ENCODE measurements at regions of chr17 and their contacts with region 1.

Region 1: GRCh38 chr17:14300575-14301278 is at the start of gene HS3ST3B1:
- DNase-seq: peak; percentile 96 to 100 (median 99)
- ATAC-seq: peak; percentile 84
- H3K4me3 ChIP-seq: peak within 1 kb of the TSS; percentile 97
- H3K4me3 Mint-ChIP-seq: peak within 1 kb of the TSS; percentile 99
- H3K27ac ChIP-seq: peak within 1 kb of the TSS; percentile 68 to 73
- H3K27ac Mint-ChIP-seq: peak within 1 kb of the TSS; percentile 86
- H3K4me1 ChIP-seq: peaks cover 69% of the 10 kb centered on the region
- H3K4me1 Mint-ChIP-seq: peaks cover 68% of the 10 kb centered on the region
- H3K27me3 ChIP-seq: peaks cover 25 to 32% of the 10 kb centered on the region in 2 experiments
- H3K27me3 Mint-ChIP-seq: peaks cover 48% of the 10 kb centered on the region
- CTCF ChIP-seq: no peak
- total RNA-seq, gene HS3ST3B1: 9.3 to 11.5 TPM

Region 2: DNA sequence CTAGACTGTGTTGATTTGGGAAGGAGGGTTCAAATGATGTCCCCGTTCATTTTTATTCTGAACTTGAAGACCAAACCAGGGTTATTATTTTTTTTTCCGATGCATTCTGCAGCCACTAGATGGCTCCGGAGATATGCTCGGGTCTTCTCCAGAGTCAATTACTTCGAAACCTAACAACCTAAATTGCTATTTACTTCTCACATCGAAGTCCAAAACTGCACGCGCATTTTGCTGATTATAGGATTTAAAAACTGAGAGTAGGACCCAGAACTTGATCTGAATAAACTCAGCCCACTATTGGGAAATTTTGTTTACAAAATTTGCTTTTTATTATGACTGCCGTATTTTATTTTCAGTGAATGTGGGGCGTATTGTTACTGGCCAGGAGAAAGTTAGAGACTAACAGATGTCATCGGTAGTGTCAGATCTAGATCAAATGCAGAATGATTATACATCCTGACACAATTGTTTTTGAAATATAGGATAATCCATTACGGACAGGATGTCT is 962.8 kb before region 1 on chr17:
- CTCF ChIA-PET with region 1: no interaction called
- POLR2A ChIA-PET with region 1: no interaction called
- intact Hi-C with region 1: loop called in 1 of 2 experiments (anchors 5 kb)
- DNase-seq: peak in 4 of 14 experiments; percentile 7 to 36 (median 26)
- ATAC-seq: no peak
- H3K4me3 ChIP-seq: no peak overlapping the region
- H3K4me3 Mint-ChIP-seq: no peak overlapping the region
- H3K27ac ChIP-seq: no peak overlapping the region
- H3K27ac Mint-ChIP-seq: no peak overlapping the region
- H3K4me1 ChIP-seq: no peaks in the 10 kb centered on the region
- H3K4me1 Mint-ChIP-seq: peaks cover 6% of the 10 kb centered on the region
- H3K27me3 ChIP-seq: peaks cover 6 to 10% of the 10 kb centered on the region in 2 experiments
- H3K27me3 Mint-ChIP-seq: peaks cover 34% of the 10 kb centered on the region
- CTCF ChIP-seq: peak; percentile 61

Region 3: GRCh38 chr17:14069251-14070021 is 231.3 kb before region 1 on chr17 and contains the start of gene COX10:
- CTCF ChIA-PET with region 1: interaction called, 6 read pairs
- POLR2A ChIA-PET with region 1: interaction called, 20 read pairs
- intact Hi-C with region 1: loop called (anchors 1 to 2 kb)
- DNase-seq: peak; percentile 68 to 88 (median 80)
- ATAC-seq: peak; percentile 99
- H3K4me3 ChIP-seq: peak within 1 kb of the TSS; percentile 89
- H3K4me3 Mint-ChIP-seq: peak within 1 kb of the TSS; percentile 97
- H3K27ac ChIP-seq: peak within 1 kb of the TSS; percentile 57 to 68
- H3K27ac Mint-ChIP-seq: peak within 1 kb of the TSS; percentile 92
- H3K4me1 ChIP-seq: peaks cover 22% of the 10 kb centered on the region
- H3K4me1 Mint-ChIP-seq: peaks cover 61% of the 10 kb centered on the region
- H3K27me3 ChIP-seq: no peaks in the 10 kb centered on the region
- H3K27me3 Mint-ChIP-seq: no peaks in the 10 kb centered on the region
- CTCF ChIP-seq: no peak
- total RNA-seq, gene COX10: 9.1 to 9.9 TPM

Region 4: GRCh38 chr17:14203388-14203787 is 97.3 kb before region 1 on chr17:
- CTCF ChIA-PET with region 1: interaction called, 26 read pairs
- POLR2A ChIA-PET with region 1: interaction called, 111 read pairs
- intact Hi-C with region 1: loop called (anchors 1 to 5 kb)
- DNase-seq: peak in 11 of 14 experiments; percentile 30 to 74 (median 44)
- ATAC-seq: peak; percentile 45
- H3K4me3 ChIP-seq: no peak overlapping the region
- H3K4me3 Mint-ChIP-seq: peak overlapping the region; percentile 66
- H3K27ac ChIP-seq: peak overlapping the region; percentile 78 to 79
- H3K27ac Mint-ChIP-seq: peak overlapping the region; percentile 94
- H3K4me1 ChIP-seq: peaks cover 86% of the 10 kb centered on the region
- H3K4me1 Mint-ChIP-seq: peaks cover 86% of the 10 kb centered on the region
- H3K27me3 ChIP-seq: no peaks in the 10 kb centered on the region
- H3K27me3 Mint-ChIP-seq: no peaks in the 10 kb centered on the region
- CTCF ChIP-seq: peak; percentile 58

Region 5: DNA sequence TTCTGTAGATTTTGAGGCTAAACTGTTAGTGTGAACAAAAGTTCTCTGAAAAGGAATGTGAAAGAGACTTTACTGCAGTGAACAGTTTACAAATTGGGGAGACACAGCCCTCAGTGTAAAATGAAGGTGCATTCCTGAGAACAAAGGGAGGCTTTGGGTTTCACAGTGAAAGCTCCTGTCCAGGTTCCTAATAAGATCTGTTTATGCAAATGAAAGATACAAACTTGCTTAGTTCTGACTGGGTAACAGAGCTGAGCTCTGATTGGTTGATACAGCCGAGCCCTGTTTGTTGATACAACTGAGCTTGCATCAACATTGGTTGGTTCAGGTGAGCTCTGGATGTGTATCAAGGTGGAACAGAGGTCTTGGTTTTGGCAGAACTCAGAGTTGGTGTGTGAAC is 55.7 kb before region 1 on chr17:
- CTCF ChIA-PET with region 1: no interaction called
- POLR2A ChIA-PET with region 1: no interaction called
- intact Hi-C with region 1: no loop called
- DNase-seq: no peak
- ATAC-seq: no peak
- H3K4me3 ChIP-seq: no peak overlapping the region
- H3K4me3 Mint-ChIP-seq: no peak overlapping the region
- H3K27ac ChIP-seq: no peak overlapping the region
- H3K27ac Mint-ChIP-seq: no peak overlapping the region
- H3K4me1 ChIP-seq: no peaks in the 10 kb centered on the region
- H3K4me1 Mint-ChIP-seq: no peaks in the 10 kb centered on the region
- H3K27me3 ChIP-seq: no peaks in the 10 kb centered on the region
- H3K27me3 Mint-ChIP-seq: no peaks in the 10 kb centered on the region
- CTCF ChIP-seq: no peak

Region 6: DNA sequence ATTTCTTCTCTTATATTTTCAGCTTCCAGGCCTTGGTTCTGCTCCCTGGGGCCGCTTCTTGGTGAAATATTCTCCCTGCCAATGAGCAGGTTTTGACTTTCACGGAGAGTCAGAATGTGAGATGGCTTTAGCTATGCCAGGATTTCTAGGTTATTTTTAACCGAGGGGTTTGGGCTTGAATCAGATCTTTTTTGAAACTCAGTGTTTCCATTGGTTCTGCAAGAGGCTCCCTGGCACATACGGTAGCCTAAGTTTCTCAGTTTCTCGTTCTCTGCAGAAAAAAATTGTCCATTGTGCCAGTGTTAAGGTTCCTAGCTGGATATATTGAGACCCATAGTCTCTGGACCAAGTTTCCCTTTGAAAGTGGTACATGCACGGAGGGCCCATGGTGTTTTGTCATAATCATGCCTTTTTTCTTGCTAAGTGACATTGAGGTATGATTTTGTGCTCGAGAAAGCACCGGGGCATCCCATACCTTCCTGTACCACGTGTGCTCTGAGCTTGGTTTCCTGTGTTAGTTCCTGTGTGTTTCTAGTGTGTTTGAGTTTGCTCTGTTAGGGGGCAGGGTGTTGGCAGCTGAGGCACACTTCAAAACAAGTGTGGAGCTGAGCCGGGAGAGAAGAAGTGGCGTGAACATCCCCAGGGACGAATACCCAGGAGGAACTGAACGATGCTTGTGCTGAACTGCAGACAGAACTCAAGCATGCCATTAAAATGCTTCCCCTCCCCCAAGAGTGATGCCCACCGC is 127.3 kb after region 1 on chr17:
- CTCF ChIA-PET with region 1: no interaction called
- POLR2A ChIA-PET with region 1: interaction called, 93 read pairs
- intact Hi-C with region 1: loop called in 1 of 2 experiments (anchors 2 kb)
- DNase-seq: peak in 13 of 14 experiments; percentile 15 to 86 (median 47)
- ATAC-seq: peak; percentile 99
- H3K4me3 ChIP-seq: peak overlapping the region; percentile 52
- H3K4me3 Mint-ChIP-seq: peak overlapping the region; percentile 71
- H3K27ac ChIP-seq: peak overlapping the region; percentile 68 to 74
- H3K27ac Mint-ChIP-seq: peak overlapping the region; percentile 93
- H3K4me1 ChIP-seq: peaks cover 47% of the 10 kb centered on the region
- H3K4me1 Mint-ChIP-seq: peaks cover 58% of the 10 kb centered on the region
- H3K27me3 ChIP-seq: no peaks in the 10 kb centered on the region
- H3K27me3 Mint-ChIP-seq: no peaks in the 10 kb centered on the region
- CTCF ChIP-seq: no peak

Region 7: GRCh38 chr17:14784997-14785696 is 484.4 kb after region 1 on chr17:
- CTCF ChIA-PET with region 1: interaction called, 3 read pairs
- POLR2A ChIA-PET with region 1: interaction called, 3 read pairs
- intact Hi-C with region 1: loop called (anchors 1 to 5 kb)
- DNase-seq: peak in 13 of 14 experiments; percentile 2 to 62 (median 30)
- ATAC-seq: peak; percentile 69
- H3K4me3 ChIP-seq: no peak overlapping the region
- H3K4me3 Mint-ChIP-seq: no peak overlapping the region
- H3K27ac ChIP-seq: no peak overlapping the region
- H3K27ac Mint-ChIP-seq: no peak overlapping the region
- H3K4me1 ChIP-seq: no peaks in the 10 kb centered on the region
- H3K4me1 Mint-ChIP-seq: no peaks in the 10 kb centered on the region
- H3K27me3 ChIP-seq: no peaks in the 10 kb centered on the region
- H3K27me3 Mint-ChIP-seq: peaks cover 11% of the 10 kb centered on the region
- CTCF ChIP-seq: peak; percentile 13

Measured in CD4-positive, alpha-beta T cell (primary cell).